Activated CD4-positive, alpha-beta T cell treated with anti-CD3 and anti-CD28 coated beads for 36 hours (primary cell): ENCODE measurements at regions of chr14 and their contacts with region 1.

Region 1: GRCh38 chr14:89096946-89097345 is 272.5 kb downstream of the TTC8 start:
- DNase-seq: no peak
- ATAC-seq: no peak
- H3K4me3 Mint-ChIP-seq: no peak overlapping the region
- H3K27ac Mint-ChIP-seq: no peak overlapping the region
- H3K4me1 Mint-ChIP-seq: no peaks in the 10 kb centered on the region
- H3K27me3 Mint-ChIP-seq: peaks cover 9% of the 10 kb centered on the region

Region 2: GRCh38 chr14:89067293-89067972 is 29.5 kb before region 1 on chr14:
- CTCF ChIA-PET with region 1: interaction called, 3 read pairs
- POLR2A ChIA-PET with region 1: no interaction called
- intact Hi-C with region 1: loop called in 1 of 2 experiments (anchors 1 kb)
- DNase-seq: peak; percentile 9
- ATAC-seq: peak; percentile 95
- H3K4me3 Mint-ChIP-seq: no peak overlapping the region
- H3K27ac Mint-ChIP-seq: no peak overlapping the region
- H3K4me1 Mint-ChIP-seq: peaks cover 15% of the 10 kb centered on the region
- H3K27me3 Mint-ChIP-seq: peaks cover 21% of the 10 kb centered on the region

Region 3: GRCh38 chr14:89155491-89155890 is 58.5 kb after region 1 on chr14:
- CTCF ChIA-PET with region 1: no interaction called
- POLR2A ChIA-PET with region 1: no interaction called
- intact Hi-C with region 1: no loop called
- DNase-seq: no peak
- ATAC-seq: no peak
- H3K4me3 Mint-ChIP-seq: no peak overlapping the region
- H3K27ac Mint-ChIP-seq: no peak overlapping the region
- H3K4me1 Mint-ChIP-seq: no peaks in the 10 kb centered on the region
- H3K27me3 Mint-ChIP-seq: no peaks in the 10 kb centered on the region